WTC11 (cell line): ENCODE measurements at regions of chr10 and their contacts with region 1.

Region 1: GRCh38 chr10:97072851-97073665 is 112.7 kb downstream of the SLIT1 start:
- DNase-seq: peak; percentile 91
- ATAC-seq: peak; percentile 76
- H3K4me3 Mint-ChIP-seq: no peak overlapping the region
- H3K27ac Mint-ChIP-seq: no peak overlapping the region
- H3K4me1 Mint-ChIP-seq: peaks cover 17% of the 10 kb centered on the region
- H3K27me3 Mint-ChIP-seq: no peaks in the 10 kb centered on the region
- CTCF ChIP-seq: peak; percentile 96

Region 2: DNA sequence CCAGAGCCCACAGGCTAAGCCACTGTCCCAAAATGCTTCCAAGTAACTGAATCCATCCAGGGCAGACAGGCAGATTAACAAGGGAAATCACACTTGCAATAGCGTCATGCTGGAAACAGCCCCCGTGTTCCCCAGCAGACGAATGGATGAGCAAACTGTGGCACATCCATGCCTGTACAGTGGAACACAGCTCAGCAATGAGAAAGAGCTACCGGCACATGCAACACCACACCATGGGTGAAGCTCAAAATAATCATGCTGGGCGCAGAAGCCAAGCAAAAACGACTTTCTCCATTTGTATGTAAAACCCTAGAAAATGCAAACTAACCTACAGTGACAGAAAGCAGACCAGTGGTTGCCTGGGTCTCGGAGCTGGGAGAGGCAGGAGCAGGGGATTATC is 40.4 kb before region 1 on chr10:
- CTCF ChIA-PET with region 1: interaction called, 49 read pairs
- POLR2A ChIA-PET with region 1: no interaction called
- DNase-seq: no peak
- ATAC-seq: no peak
- H3K4me3 Mint-ChIP-seq: no peak overlapping the region
- H3K27ac Mint-ChIP-seq: no peak overlapping the region
- H3K4me1 Mint-ChIP-seq: peaks cover 38% of the 10 kb centered on the region
- H3K27me3 Mint-ChIP-seq: peaks cover under 1% of the 10 kb centered on the region; the same call in 1 of the 2 replicates
- CTCF ChIP-seq: no peak

Region 3: DNA sequence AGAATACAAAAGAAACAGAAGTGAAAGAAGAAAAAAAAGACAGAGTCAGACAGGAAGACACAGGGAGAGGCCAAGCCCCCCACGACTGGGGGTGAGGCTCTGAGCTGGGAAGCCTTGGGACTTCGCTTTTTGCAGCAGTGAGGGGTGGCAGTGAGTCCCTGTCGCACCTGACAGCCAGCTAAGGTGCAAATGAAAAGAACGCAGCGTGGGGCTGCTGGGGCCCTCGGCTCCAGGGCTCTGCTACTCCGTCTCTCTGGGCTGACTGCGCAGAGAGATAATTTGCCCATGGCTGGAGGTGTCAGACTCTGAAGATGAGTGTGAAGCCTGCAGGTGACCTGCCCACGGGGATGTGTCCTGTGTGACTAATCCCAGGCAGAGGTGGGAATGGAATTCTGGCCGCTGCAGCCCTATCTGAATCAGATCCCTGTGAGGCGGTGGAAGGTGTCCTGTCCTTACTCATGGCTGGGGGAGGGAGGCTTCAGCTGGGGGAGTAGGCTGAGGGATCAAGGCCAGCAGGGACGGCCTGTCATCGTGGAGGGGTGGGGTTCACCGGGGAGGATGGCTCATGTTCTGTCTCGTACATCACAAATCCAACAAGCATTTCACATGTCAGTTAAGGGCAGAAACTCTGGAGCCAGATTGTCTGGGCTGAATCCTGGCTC is 16.3 kb after region 1 on chr10:
- CTCF ChIA-PET with region 1: interaction called, 22 read pairs
- POLR2A ChIA-PET with region 1: no interaction called
- DNase-seq: no peak
- ATAC-seq: no peak; the same call in 1 of the 2 replicates
- H3K4me3 Mint-ChIP-seq: no peak overlapping the region
- H3K27ac Mint-ChIP-seq: no peak overlapping the region
- H3K4me1 Mint-ChIP-seq: peaks cover 7% of the 10 kb centered on the region
- H3K27me3 Mint-ChIP-seq: no peaks in the 10 kb centered on the region; the same call in 1 of the 2 replicates
- CTCF ChIP-seq: no peak

Region 4: GRCh38 chr10:97117372-97117771 is 44.3 kb after region 1 on chr10:
- CTCF ChIA-PET with region 1: interaction called, 82 read pairs
- POLR2A ChIA-PET with region 1: no interaction called
- DNase-seq: no peak
- ATAC-seq: 0 out of 2 replicates have a peak, but pooled peaks have one; percentile 27
- H3K4me3 Mint-ChIP-seq: no peak overlapping the region
- H3K27ac Mint-ChIP-seq: no peak overlapping the region
- H3K4me1 Mint-ChIP-seq: peaks cover 8% of the 10 kb centered on the region
- H3K27me3 Mint-ChIP-seq: no peaks in the 10 kb centered on the region; the same call in 1 of the 2 replicates
- CTCF ChIP-seq: no peak

Region 5: GRCh38 chr10:97170326-97170725 is 97.3 kb after region 1 on chr10:
- CTCF ChIA-PET with region 1: interaction called, 24 read pairs
- POLR2A ChIA-PET with region 1: interaction called, 3 read pairs
- DNase-seq: no peak
- ATAC-seq: peak; percentile 58
- H3K4me3 Mint-ChIP-seq: no peak overlapping the region
- H3K27ac Mint-ChIP-seq: no peak overlapping the region
- H3K4me1 Mint-ChIP-seq: peaks cover 10% of the 10 kb centered on the region; the same call in 1 of the 2 replicates
- H3K27me3 Mint-ChIP-seq: no peaks in the 10 kb centered on the region
- CTCF ChIP-seq: no peak

Region 6: DNA sequence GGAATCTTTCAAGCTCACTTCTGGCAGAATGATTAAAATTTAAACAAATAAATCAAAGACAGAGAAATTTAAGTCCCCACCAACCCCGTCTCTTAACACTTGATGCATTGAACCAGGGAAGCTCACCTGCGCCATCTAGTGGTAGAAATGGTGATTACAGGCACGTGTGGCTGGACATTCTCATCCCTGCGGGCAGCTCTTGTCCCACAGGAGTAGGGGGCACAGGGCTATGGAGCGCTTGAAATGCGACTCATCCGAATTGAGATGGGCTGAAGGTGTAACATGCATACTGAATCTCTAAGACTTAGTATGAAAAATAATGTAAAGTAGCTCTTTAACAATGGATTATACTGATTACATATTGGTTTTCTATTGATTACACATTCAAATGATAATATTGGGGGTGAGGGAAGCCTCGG is 137.5 kb after region 1 on chr10:
- CTCF ChIA-PET with region 1: interaction called, 364 read pairs
- POLR2A ChIA-PET with region 1: interaction called, 3 read pairs
- DNase-seq: peak; percentile 91
- ATAC-seq: peak; percentile 93
- H3K4me3 Mint-ChIP-seq: no peak overlapping the region
- H3K27ac Mint-ChIP-seq: no peak overlapping the region
- H3K4me1 Mint-ChIP-seq: no peaks in the 10 kb centered on the region
- H3K27me3 Mint-ChIP-seq: no peaks in the 10 kb centered on the region
- CTCF ChIP-seq: peak; percentile 98

Region 7: GRCh38 chr10:97234400-97234799 is 161.3 kb after region 1 on chr10:
- CTCF ChIA-PET with region 1: interaction called, 27 read pairs
- POLR2A ChIA-PET with region 1: no interaction called
- DNase-seq: no peak
- ATAC-seq: no peak
- H3K4me3 Mint-ChIP-seq: no peak overlapping the region
- H3K27ac Mint-ChIP-seq: no peak overlapping the region
- H3K4me1 Mint-ChIP-seq: no peaks in the 10 kb centered on the region
- H3K27me3 Mint-ChIP-seq: no peaks in the 10 kb centered on the region
- CTCF ChIP-seq: peak; percentile 42; the same call in 1 of the 2 replicates